Naive thymus-derived CD4-positive, alpha-beta T cell (primary cell): ENCODE measurements at regions of chr22 and their contacts with region 1.

Region 1: GRCh38 chr22:42856865-42857704 is at the start of gene ARFGAP3:
- DNase-seq: peak; percentile 87 to 99 (median 96)
- ATAC-seq: peak; percentile 97
- H3K4me3 ChIP-seq: peak within 1 kb of the TSS; percentile 77
- H3K4me3 Mint-ChIP-seq: peak within 1 kb of the TSS; percentile 84 to 92 (median 88)
- H3K27ac ChIP-seq: peak within 1 kb of the TSS; percentile 93
- H3K27ac Mint-ChIP-seq: peak within 1 kb of the TSS; percentile 80 to 94 (median 89)
- H3K4me1 ChIP-seq: peaks cover 4 to 6% of the 10 kb centered on the region in 2 donors
- H3K4me1 Mint-ChIP-seq: peaks cover 0 to 22% (median 10%) of the 10 kb centered on the region in 7 donors
- H3K27me3 ChIP-seq: no peaks in the 10 kb centered on the region
- H3K27me3 Mint-ChIP-seq: no peaks in the 10 kb centered on the region
- total RNA-seq, gene ARFGAP3: 22.9 to 38.4 (median 31.0) TPM

Region 2: DNA sequence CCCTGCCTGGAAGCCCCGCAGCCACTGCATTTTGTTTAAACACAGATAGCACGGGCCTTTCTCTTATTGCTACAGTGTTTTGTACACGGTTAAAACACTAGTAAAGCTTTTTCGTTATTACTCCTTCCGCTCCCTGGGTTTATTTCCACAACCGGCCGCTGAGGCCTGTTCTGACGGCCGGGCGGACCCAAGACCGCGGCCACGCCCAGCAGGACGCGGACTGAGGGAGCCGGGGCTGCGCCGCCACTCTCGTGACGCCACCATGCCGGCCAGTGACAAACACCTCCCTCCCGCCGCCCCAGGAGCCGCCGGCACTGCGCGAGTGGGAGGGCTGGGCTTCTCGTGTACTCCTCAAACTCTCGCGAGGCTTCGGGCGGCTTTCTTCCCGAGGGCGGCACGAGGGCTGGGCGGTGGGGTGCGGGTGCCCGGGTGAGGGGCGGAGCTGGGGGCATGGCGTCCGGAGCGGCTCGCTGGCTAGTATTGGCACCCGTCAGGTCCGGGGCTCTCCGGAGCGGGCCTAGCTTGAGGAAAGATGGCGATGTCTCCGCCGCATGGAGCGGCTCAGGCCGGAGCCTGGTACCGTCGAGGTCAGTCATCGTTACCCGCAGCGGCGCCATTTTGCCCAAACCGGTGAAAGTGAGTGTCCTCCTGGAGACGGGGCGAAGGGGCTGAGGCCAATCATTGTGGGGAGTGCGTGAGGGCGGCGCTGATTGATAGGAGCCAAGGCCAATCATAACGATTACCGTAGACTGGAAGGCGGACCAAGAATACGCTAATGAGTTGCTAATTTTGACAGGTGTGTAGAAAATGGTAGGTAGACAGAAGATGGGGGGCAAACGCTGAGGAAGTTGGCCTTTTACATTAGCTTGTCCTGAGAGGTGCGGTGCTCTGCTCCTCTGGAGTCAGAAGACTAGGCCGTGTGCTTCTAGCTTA is 777.5 kb before region 1 on chr22 and contains the start of gene SMDT1:
- CTCF ChIA-PET with region 1: no interaction called
- POLR2A ChIA-PET with region 1: no interaction called
- intact Hi-C with region 1: loop called in 1 of 2 experiments (anchors 10 kb)
- DNase-seq: peak; percentile 96 to 100 (median 99)
- ATAC-seq: peak; percentile 94
- H3K4me3 ChIP-seq: peak within 1 kb of the TSS; percentile 98
- H3K4me3 Mint-ChIP-seq: peak within 1 kb of the TSS; percentile 94 to 99 (median 96)
- H3K27ac ChIP-seq: peak within 1 kb of the TSS; percentile 97
- H3K27ac Mint-ChIP-seq: peak within 1 kb of the TSS; percentile 96 to 99 (median 99)
- H3K4me1 ChIP-seq: peaks cover 10 to 16% of the 10 kb centered on the region in 2 donors
- H3K4me1 Mint-ChIP-seq: peaks cover 9 to 52% (median 43%) of the 10 kb centered on the region in 7 donors
- H3K27me3 ChIP-seq: no peaks in the 10 kb centered on the region
- H3K27me3 Mint-ChIP-seq: no peaks in the 10 kb centered on the region
- total RNA-seq, gene SMDT1: 40.4 to 105 (median 98.8) TPM

Region 3: DNA sequence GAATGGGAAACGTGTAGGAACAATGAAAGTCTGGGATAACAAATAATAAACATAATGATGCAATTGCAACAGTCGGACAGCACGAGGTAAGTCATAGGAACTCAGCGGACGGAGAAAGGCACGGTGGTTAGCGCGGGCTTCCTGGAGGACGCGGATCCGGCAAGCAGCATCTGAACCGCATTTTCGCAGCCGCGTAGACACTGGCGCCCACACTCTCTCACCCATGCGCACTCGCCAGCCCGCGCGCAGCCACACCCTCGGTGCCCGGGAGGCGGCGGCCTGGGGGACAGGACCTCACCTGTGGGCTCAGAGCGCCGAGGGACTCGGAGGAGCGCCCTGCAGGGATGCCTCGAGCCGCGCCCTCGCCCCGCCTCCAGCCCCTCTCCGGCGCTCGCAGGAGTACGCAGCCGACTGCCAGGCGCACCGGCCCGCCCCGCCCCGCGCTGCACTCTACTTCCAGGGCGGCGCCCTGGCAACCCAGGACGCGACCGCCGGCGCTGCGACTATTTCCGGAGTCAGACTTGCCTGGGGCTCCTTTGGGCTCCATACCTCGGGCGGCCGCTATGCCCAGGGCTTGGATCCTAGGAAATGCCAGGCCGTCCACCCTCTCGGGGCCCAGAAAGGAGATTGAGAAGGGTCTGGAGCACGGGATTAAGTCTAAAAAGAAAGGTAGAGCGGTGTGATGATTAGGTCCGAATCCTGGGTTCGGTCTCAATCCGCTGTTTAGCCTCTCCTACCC is 232.1 kb after region 1 on chr22 and contains the start of gene TTLL1:
- CTCF ChIA-PET with region 1: no interaction called
- POLR2A ChIA-PET with region 1: no interaction called
- intact Hi-C with region 1: loop called in 1 of 2 experiments (anchors 2 kb)
- DNase-seq: peak; percentile 79 to 90 (median 87)
- ATAC-seq: peak; percentile 93
- H3K4me3 ChIP-seq: peak within 1 kb of the TSS; percentile 49
- H3K4me3 Mint-ChIP-seq: peak within 1 kb of the TSS; percentile 77 to 98 (median 92)
- H3K27ac ChIP-seq: peak within 1 kb of the TSS; percentile 60
- H3K27ac Mint-ChIP-seq: peak within 1 kb of the TSS; percentile 49 to 96 (median 82)
- H3K4me1 ChIP-seq: peaks cover 8 to 13% of the 10 kb centered on the region in 2 donors
- H3K4me1 Mint-ChIP-seq: peaks cover 0 to 19% (median 17%) of the 10 kb centered on the region in 7 donors
- H3K27me3 ChIP-seq: no peaks in the 10 kb centered on the region
- H3K27me3 Mint-ChIP-seq: no peaks in the 10 kb centered on the region
- total RNA-seq, gene TTLL1: 4.6 to 7.7 (median 6.9) TPM